Ascending aorta (tissue), 2 donors: ENCODE measurements at regions of chr16 and their contacts with region 1.

Region 1: DNA sequence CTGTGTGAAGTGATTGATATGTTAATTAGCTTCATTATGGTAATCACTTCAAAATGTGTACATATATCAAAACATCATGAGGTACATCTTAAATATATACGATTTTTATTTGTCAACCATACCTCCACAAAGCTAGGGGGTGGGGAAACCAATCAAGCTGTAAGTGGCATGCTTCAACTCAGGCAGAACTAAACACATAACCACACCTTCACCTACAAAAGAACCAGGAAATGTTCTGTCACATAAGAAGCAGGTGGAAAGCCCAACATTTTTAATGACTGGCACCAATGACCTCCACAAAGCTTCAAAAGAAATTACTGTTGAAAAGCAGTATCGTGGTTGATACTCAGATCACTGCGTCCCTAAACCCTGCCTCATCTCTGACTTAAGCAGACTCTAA is 867.7 kb upstream of the EEF2KMT start:
- DNase-seq: no peak
- H3K4me3 ChIP-seq: no peak overlapping the region
- H3K27ac ChIP-seq: no peak overlapping the region
- H3K4me1 ChIP-seq: no peaks in the 10 kb centered on the region
- H3K27me3 ChIP-seq: no peaks in the 10 kb centered on the region
- CTCF ChIP-seq: no peak

Region 2: GRCh38 chr16:5918567-5919127 is 46.7 kb before region 1 on chr16:
- intact Hi-C with region 1: loop called (anchors 5 kb)
- DNase-seq: no peak
- H3K4me3 ChIP-seq: no peak overlapping the region
- H3K27ac ChIP-seq: no peak overlapping the region
- H3K4me1 ChIP-seq: no peaks in the 10 kb centered on the region
- H3K27me3 ChIP-seq: no peaks in the 10 kb centered on the region
- CTCF ChIP-seq: no peak